ENCODE measurements at regions of chr4 and their contacts with region 1.

Region 1: GRCh38 chr4:174522183-174523048 is at the start of gene HPGD:
- DNase-seq: peak; percentile 43
- H3K4me3 Mint-ChIP-seq: peak within 1 kb of the TSS; percentile 83
- H3K27ac Mint-ChIP-seq: no peak within 1 kb of the TSS
- H3K4me1 Mint-ChIP-seq: peaks cover 20% of the 10 kb centered on the region
- H3K27me3 Mint-ChIP-seq: no peaks in the 10 kb centered on the region
- CTCF ChIP-seq: no peak
- total RNA-seq, gene HPGD: 4.0 and 4.5 TPM in 2 replicates

Region 2: GRCh38 chr4:174307694-174308093 is 214.7 kb before region 1 on chr4:
- CTCF ChIA-PET with region 1: no interaction called
- intact Hi-C with region 1: no loop called
- DNase-seq: no peak
- H3K4me3 Mint-ChIP-seq: no peak overlapping the region
- H3K27ac Mint-ChIP-seq: no peak overlapping the region
- H3K4me1 Mint-ChIP-seq: no peaks in the 10 kb centered on the region
- H3K27me3 Mint-ChIP-seq: no peaks in the 10 kb centered on the region
- CTCF ChIP-seq: no peak

Region 3: GRCh38 chr4:174365018-174365587 is 157.3 kb before region 1 on chr4:
- CTCF ChIA-PET with region 1: no interaction called
- intact Hi-C with region 1: loop called (anchors 2 kb)
- DNase-seq: peak; percentile 42
- H3K4me3 Mint-ChIP-seq: no peak overlapping the region
- H3K27ac Mint-ChIP-seq: no peak overlapping the region
- H3K4me1 Mint-ChIP-seq: no peaks in the 10 kb centered on the region
- H3K27me3 Mint-ChIP-seq: no peaks in the 10 kb centered on the region
- CTCF ChIP-seq: peak; percentile 21

Region 4: DNA sequence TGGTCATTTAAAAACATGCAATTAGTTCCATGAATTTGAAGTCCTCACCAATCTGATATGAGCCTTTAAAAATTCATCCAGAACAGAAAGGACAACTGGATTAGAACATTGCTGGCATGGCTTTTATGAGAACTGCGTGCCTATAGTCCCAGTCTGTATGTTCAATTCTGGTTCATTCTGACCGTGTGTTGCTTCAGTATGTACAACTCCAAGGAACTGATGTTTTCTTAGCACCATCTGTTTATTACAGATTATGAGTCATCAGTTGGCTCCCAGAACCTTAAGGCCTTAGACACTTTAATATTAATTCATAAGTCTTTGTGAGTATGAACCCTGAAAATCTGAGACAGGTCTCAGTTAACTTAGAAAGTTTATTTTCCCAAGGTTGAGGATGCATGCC is 123.7 kb before region 1 on chr4:
- CTCF ChIA-PET with region 1: no interaction called
- intact Hi-C with region 1: loop called (anchors 10 kb)
- DNase-seq: no peak
- H3K4me3 Mint-ChIP-seq: no peak overlapping the region
- H3K27ac Mint-ChIP-seq: peak overlapping the region; percentile 22
- H3K4me1 Mint-ChIP-seq: peaks cover 50% of the 10 kb centered on the region
- H3K27me3 Mint-ChIP-seq: no peaks in the 10 kb centered on the region
- CTCF ChIP-seq: no peak

Region 5: GRCh38 chr4:174631901-174632758 is 109.7 kb after region 1 on chr4:
- CTCF ChIA-PET with region 1: interaction called, 5 read pairs
- intact Hi-C with region 1: loop called (anchors 1 kb)
- DNase-seq: peak; percentile 12
- H3K4me3 Mint-ChIP-seq: no peak overlapping the region
- H3K27ac Mint-ChIP-seq: no peak overlapping the region
- H3K4me1 Mint-ChIP-seq: peaks cover 3% of the 10 kb centered on the region
- H3K27me3 Mint-ChIP-seq: no peaks in the 10 kb centered on the region
- CTCF ChIP-seq: no peak